Activated T-helper 1 cell treated with anti-CD3 and anti-CD28 coated beads, Interleukin-12 subunit alpha, Interleukin-12 subunit beta, Interleukin-2, Interleukin-4 antibody, amounts not matched to agents 30 ng/mL and 10 ng/mL and 1 ng/mL, durations not matched to agents 14 hours and 24 hours and 36 hours (primary cell): ENCODE measurements at regions of chr10 and their contacts with region 1.

Region 1: DNA sequence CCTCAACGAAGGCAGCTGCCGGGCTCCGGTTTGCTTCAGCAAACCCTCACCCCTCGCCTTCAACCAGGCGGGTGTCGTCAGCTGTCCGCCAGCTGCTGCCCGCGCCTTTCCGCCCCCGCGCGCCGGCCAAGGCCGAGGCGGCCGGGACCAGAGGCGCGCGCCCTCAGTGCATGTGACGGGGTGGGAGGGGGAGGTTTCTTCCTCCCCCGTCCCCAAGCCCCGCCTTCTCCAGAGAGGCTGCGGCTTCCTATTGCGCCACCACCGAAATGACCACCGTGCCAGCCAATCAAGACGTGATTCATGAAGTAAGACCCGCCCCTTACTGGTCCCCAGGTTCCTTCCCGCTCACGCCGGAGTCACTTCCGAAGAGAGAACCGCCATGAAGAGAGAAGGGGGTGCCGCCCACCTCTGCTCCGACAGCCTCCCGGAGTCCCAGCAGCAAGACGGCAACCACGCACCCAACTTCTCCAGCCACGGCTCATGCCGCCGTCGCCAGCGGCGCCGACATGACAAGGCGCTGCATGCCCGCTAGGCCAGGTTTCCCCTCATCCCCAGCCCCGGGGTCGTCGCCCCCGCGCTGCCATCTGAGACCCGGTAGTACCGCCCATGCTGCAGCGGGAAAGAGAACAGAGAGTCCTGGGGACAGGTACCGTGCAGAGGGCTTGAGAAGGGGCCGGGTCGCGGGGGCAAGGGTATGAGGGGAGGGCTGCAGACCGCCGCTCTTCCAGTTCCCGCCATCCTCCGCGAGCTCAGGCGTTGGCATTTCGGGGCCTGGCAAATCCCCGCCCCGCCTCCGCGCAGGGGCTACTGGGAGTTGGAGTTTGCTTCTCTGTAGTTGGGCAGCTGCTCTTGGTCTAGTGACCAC is at the start of gene SLF2:
- DNase-seq: peak; percentile 94
- H3K4me3 Mint-ChIP-seq: peak within 1 kb of the TSS; percentile 97
- H3K27ac Mint-ChIP-seq: peak within 1 kb of the TSS; percentile 95
- H3K4me1 Mint-ChIP-seq: peaks cover 48% of the 10 kb centered on the region
- H3K27me3 Mint-ChIP-seq: no peaks in the 10 kb centered on the region
- total RNA-seq, gene SLF2: 33.4 and 36.1 TPM in 2 replicates

Region 2: GRCh38 chr10:100346765-100347567 is 565.9 kb before region 1 on chr10 and contains the start of gene SCD:
- intact Hi-C with region 1: loop called (anchors 10 kb)
- DNase-seq: peak; percentile 88
- H3K4me3 Mint-ChIP-seq: peak within 1 kb of the TSS; percentile 100
- H3K27ac Mint-ChIP-seq: peak within 1 kb of the TSS; percentile 99
- H3K4me1 Mint-ChIP-seq: peaks cover 72% of the 10 kb centered on the region
- H3K27me3 Mint-ChIP-seq: no peaks in the 10 kb centered on the region
- total RNA-seq, gene SCD: 194 TPM in 2 replicates

Region 3: DNA sequence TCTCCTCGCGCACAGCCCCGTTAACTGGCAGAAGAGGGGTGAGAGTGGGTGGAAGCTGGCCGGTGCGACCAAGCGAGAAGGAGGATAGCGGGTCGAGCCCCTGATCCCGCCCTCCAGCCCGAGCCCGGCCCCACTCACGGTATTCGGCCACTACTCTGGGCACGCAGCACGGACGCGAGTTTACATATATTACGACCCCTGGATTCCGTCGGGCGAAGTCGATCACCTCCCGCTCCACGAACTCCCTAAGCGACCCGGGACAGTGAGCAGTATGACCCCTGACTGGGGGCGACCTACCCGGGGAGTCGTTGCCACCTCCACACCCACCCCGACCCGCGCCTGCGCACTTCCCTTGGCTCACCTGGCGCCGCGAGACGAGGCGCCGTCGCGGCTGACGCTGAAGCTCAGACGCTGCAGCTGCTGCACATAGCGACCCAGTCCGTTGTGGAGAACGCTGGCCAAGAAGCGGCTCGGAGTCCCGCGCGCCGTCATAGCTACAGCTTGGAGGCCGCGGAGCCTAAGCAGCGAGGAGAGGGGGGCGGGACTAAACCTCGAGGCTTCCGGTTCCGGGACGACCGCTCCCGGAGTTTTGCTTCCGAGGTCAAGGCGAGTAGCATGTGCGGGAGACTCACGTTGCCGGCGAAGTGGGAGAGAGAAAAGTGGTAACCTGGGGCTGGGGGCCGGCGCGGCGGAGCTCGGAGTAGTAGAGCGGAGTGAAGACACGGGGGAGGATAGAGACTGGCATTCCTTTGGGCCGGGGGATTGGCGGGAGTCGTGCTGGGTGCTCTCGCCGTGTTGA is 74.3 kb after region 1 on chr10 and contains the starts of genes MRPL43 and TWNK:
- intact Hi-C with region 1: loop called (anchors 1 kb)
- DNase-seq: peak; percentile 80
- H3K4me3 Mint-ChIP-seq: peak within 1 kb of the TSS; percentile 98
- H3K27ac Mint-ChIP-seq: peak within 1 kb of the TSS; percentile 85
- H3K4me1 Mint-ChIP-seq: peaks cover 24% of the 10 kb centered on the region
- H3K27me3 Mint-ChIP-seq: no peaks in the 10 kb centered on the region
- total RNA-seq, gene MRPL43: 61.5 and 63.2 TPM in 2 replicates
- total RNA-seq, gene TWNK: 41.1 and 42.3 TPM in 2 replicates

Region 4: GRCh38 chr10:101012525-101013364 is 99.9 kb after region 1 on chr10:
- intact Hi-C with region 1: loop called (anchors 2 kb)
- DNase-seq: peak; percentile 58
- H3K4me3 Mint-ChIP-seq: no peak overlapping the region
- H3K27ac Mint-ChIP-seq: peak overlapping the region; percentile 64
- H3K4me1 Mint-ChIP-seq: peaks cover 27% of the 10 kb centered on the region
- H3K27me3 Mint-ChIP-seq: peaks cover 26% of the 10 kb centered on the region

Region 5: GRCh38 chr10:101587725-101588653 is 675.2 kb after region 1 on chr10 and contains the starts of genes DPCD and POLL:
- intact Hi-C with region 1: loop called (anchors 2 kb)
- DNase-seq: peak; percentile 85
- H3K4me3 Mint-ChIP-seq: peak within 1 kb of the TSS; percentile 93
- H3K27ac Mint-ChIP-seq: peak within 1 kb of the TSS; percentile 81
- H3K4me1 Mint-ChIP-seq: peaks cover 24% of the 10 kb centered on the region
- H3K27me3 Mint-ChIP-seq: peaks cover 4% of the 10 kb centered on the region
- total RNA-seq, gene DPCD: 3.6 and 4.8 TPM in 2 replicates
- total RNA-seq, gene POLL: 32.4 and 33.5 TPM in 2 replicates